ENCODE measurements at regions of chr1 and their contacts with region 1.

Region 1: DNA sequence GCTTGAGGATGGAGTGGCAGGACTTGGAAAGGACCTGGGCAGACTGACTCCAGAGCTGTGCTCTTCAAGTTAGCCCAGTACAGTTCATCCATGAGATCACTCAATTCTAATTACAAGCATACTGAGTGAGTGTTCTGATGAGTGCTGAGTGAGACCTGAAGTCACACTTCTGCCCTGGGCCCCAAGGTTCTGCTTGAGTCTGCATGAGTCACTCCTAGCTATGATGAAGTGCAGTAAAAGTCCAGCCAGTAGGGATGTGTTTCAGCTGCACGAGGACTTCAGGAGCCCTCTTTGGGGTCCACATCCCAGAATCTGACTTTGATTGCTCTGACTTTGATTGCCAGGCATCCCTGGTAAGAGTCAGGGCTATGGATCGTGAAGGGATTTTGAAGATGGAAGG is 35.8 kb downstream of the PLEKHA6 start:
- DNase-seq: peak in 3 of 7 donors; percentile 35 to 56 (median 35)
- H3K4me3 ChIP-seq: no peak overlapping the region
- H3K27ac ChIP-seq: no peak overlapping the region
- H3K4me1 ChIP-seq: peaks cover 0 to 21% of the 10 kb centered on the region in 2 donors
- H3K27me3 ChIP-seq: no peaks in the 10 kb centered on the region
- CTCF ChIP-seq: no peak
- POLR2A ChIP-seq: no peak

Region 2: DNA sequence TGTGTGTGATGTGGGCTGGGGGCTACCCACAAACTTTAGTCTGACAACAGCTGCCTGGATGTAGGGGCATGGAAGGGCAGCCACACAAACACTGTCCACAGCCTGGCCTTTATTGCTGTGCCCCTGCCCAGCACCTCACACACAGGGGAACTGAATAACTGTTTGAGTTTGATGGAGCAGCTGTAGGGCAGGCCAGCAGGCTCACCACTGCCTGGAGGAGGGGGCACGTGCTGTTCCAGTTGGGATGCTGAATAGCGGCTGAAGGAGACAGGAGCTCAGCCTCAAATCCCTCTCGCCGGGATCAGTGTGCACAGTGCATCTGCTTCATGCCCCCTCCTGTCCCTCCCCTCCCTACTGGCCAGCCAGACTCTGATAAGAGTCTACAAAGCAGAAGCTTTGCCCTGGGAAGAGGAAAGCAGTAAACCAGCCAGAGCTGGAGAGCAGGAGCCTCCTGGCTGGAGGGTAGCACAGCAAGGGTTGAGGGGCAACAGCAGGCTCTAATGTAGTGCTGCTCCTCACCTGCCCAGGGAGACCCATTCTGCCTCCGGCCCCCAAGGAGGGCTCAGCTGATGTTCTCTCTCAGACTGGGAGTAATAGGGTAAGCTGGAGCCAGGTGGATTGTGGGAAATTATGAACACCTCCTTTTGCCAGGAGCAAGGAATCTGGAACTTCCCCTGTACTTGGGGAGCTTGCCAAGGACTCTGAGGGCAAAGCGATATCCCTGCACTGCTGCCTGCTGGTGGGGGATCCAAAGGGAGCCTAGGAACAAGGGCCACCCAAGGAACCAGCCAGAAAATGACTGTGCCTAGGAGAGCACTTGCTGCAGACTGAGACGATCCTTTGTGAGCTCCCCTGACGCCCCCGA is 39.9 kb before region 1 on chr1:
- intact Hi-C with region 1: loop called in 1 of 2 experiments (anchors 5 kb)
- DNase-seq: no peak
- H3K4me3 ChIP-seq: no peak overlapping the region
- H3K27ac ChIP-seq: peak overlapping the region in 1 of 5 donors; percentile 78
- H3K4me1 ChIP-seq: peaks cover 5 to 26% of the 10 kb centered on the region in 2 donors
- H3K27me3 ChIP-seq: no peaks in the 10 kb centered on the region
- CTCF ChIP-seq: no peak
- POLR2A ChIP-seq: no peak

Measured in adrenal gland (tissue), 19 donors.